Activated CD4-positive, alpha-beta T cell treated with anti-CD3 and anti-CD28 coated beads for 36 hours (primary cell): ENCODE measurements at regions of chr12 and their contacts with region 1.

Region 1: DNA sequence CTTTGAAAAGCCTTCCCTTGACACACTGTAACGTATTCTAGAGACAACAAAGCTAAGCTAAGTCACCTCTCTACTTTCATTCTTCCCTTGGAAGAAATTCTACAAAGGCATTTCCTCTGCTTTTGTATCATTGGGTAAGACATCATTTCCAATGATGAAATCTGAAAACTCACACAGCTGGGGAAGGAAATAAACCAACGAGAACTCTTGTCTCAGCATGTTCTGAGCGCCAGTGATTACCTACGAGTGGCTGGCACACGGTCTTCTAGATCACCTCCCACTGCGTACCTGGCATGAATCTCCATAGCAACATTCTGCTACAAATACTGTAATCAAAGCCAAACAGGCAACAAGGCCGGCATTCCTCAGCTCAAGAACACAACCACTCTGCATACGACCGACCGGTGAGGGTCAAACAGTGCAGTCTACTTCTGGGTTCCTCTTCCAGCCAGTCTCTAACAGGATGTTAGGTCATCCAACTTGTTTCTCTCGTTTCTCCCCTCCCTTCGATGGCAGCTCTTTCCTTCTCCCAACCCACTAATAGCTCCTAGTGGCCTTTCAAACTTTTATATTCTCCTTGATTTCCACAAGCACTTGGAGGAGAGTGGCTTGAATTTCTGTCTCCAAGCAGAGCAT is 7.6 kb downstream of the VPS37B start:
- DNase-seq: peak; percentile 67
- ATAC-seq: peak; percentile 78
- H3K4me3 Mint-ChIP-seq: peak overlapping the region; percentile 66
- H3K27ac Mint-ChIP-seq: peak overlapping the region; percentile 90
- H3K4me1 Mint-ChIP-seq: peaks cover 78% of the 10 kb centered on the region
- H3K27me3 Mint-ChIP-seq: peaks cover 8% of the 10 kb centered on the region

Region 2: GRCh38 chr12:122646517-122647217 is 241.7 kb before region 1 on chr12:
- CTCF ChIA-PET with region 1: no interaction called
- POLR2A ChIA-PET with region 1: no interaction called
- intact Hi-C with region 1: loop called in 1 of 2 experiments (anchors 5 kb)
- DNase-seq: peak; percentile 81
- ATAC-seq: peak; percentile 97
- H3K4me3 Mint-ChIP-seq: peak overlapping the region; percentile 54
- H3K27ac Mint-ChIP-seq: peak overlapping the region; percentile 79
- H3K4me1 Mint-ChIP-seq: peaks cover 18% of the 10 kb centered on the region
- H3K27me3 Mint-ChIP-seq: peaks cover 2% of the 10 kb centered on the region

Region 3: GRCh38 chr12:122732170-122732569 is 156.2 kb before region 1 on chr12:
- CTCF ChIA-PET with region 1: no interaction called
- POLR2A ChIA-PET with region 1: no interaction called
- intact Hi-C with region 1: loop called in 1 of 2 experiments (anchors 1 kb)
- DNase-seq: peak; percentile 63
- ATAC-seq: peak; percentile 20
- H3K4me3 Mint-ChIP-seq: no peak overlapping the region
- H3K27ac Mint-ChIP-seq: peak overlapping the region; percentile 83
- H3K4me1 Mint-ChIP-seq: peaks cover 64% of the 10 kb centered on the region
- H3K27me3 Mint-ChIP-seq: no peaks in the 10 kb centered on the region

Region 4: GRCh38 chr12:122946690-122947341 is 58.5 kb after region 1 on chr12:
- CTCF ChIA-PET with region 1: interaction called, 5 read pairs
- POLR2A ChIA-PET with region 1: no interaction called
- intact Hi-C with region 1: loop called in 1 of 2 experiments (anchors 2 kb)
- DNase-seq: peak; percentile 94
- ATAC-seq: peak; percentile 98
- H3K4me3 Mint-ChIP-seq: no peak overlapping the region
- H3K27ac Mint-ChIP-seq: peak overlapping the region; percentile 40
- H3K4me1 Mint-ChIP-seq: peaks cover 20% of the 10 kb centered on the region
- H3K27me3 Mint-ChIP-seq: no peaks in the 10 kb centered on the region